B cell (primary cell): ENCODE measurements at regions of chr7 and their contacts with region 1.

Region 1: GRCh38 chr7:141533149-141533949 is 17.9 kb upstream of the AGK start:
- DNase-seq: peak; percentile 67
- ATAC-seq: peak; percentile 63
- H3K4me3 ChIP-seq: no peak overlapping the region
- H3K4me3 Mint-ChIP-seq: no peak overlapping the region
- H3K27ac ChIP-seq: no peak overlapping the region
- H3K27ac Mint-ChIP-seq: no peak overlapping the region
- H3K4me1 ChIP-seq: no peaks in the 10 kb centered on the region
- H3K4me1 Mint-ChIP-seq: no peaks in the 10 kb centered on the region
- H3K27me3 ChIP-seq: peaks cover 0 to 16% (median 7%) of the 10 kb centered on the region in 4 experiments
- H3K27me3 Mint-ChIP-seq: peaks cover 37% of the 10 kb centered on the region
- CTCF ChIP-seq: peak; percentile 95

Region 2: GRCh38 chr7:140517546-140518369 is 1015.6 kb before region 1 on chr7:
- CTCF ChIA-PET with region 1: interaction called, 15 read pairs
- POLR2A ChIA-PET with region 1: no interaction called
- intact Hi-C with region 1: no loop called
- DNase-seq: peak; percentile 76
- ATAC-seq: peak; percentile 67
- H3K4me3 ChIP-seq: no peak overlapping the region
- H3K4me3 Mint-ChIP-seq: peak overlapping the region; percentile 62
- H3K27ac ChIP-seq: no peak overlapping the region
- H3K27ac Mint-ChIP-seq: no peak overlapping the region
- H3K4me1 ChIP-seq: peaks cover 0 to 5% of the 10 kb centered on the region in 2 donors
- H3K4me1 Mint-ChIP-seq: peaks cover 4% of the 10 kb centered on the region
- H3K27me3 ChIP-seq: peaks cover 0 to 3% (median 0%) of the 10 kb centered on the region in 4 experiments
- H3K27me3 Mint-ChIP-seq: peaks cover 21% of the 10 kb centered on the region
- CTCF ChIP-seq: peak; percentile 75

Region 3: GRCh38 chr7:140810830-140811556 is 722.4 kb before region 1 on chr7:
- CTCF ChIA-PET with region 1: interaction called, 5 read pairs
- POLR2A ChIA-PET with region 1: no interaction called
- intact Hi-C with region 1: loop called (anchors 1 kb)
- DNase-seq: peak; percentile 82
- ATAC-seq: peak; percentile 73
- H3K4me3 ChIP-seq: no peak overlapping the region
- H3K4me3 Mint-ChIP-seq: no peak overlapping the region
- H3K27ac ChIP-seq: no peak overlapping the region
- H3K27ac Mint-ChIP-seq: peak overlapping the region; percentile 17
- H3K4me1 ChIP-seq: no peaks in the 10 kb centered on the region
- H3K4me1 Mint-ChIP-seq: peaks cover 1% of the 10 kb centered on the region
- H3K27me3 ChIP-seq: no peaks in the 10 kb centered on the region
- H3K27me3 Mint-ChIP-seq: no peaks in the 10 kb centered on the region
- CTCF ChIP-seq: peak; percentile 82

Region 4: GRCh38 chr7:141071260-141071854 is 462.0 kb before region 1 on chr7:
- CTCF ChIA-PET with region 1: interaction called, 3 read pairs
- POLR2A ChIA-PET with region 1: no interaction called
- intact Hi-C with region 1: loop called (anchors 2 kb)
- DNase-seq: peak; percentile 20
- ATAC-seq: no peak
- H3K4me3 ChIP-seq: peak overlapping the region in 4 of 5 experiments; percentile 13 to 50 (median 34)
- H3K4me3 Mint-ChIP-seq: peak overlapping the region; percentile 85
- H3K27ac ChIP-seq: no peak overlapping the region
- H3K27ac Mint-ChIP-seq: no peak overlapping the region
- H3K4me1 ChIP-seq: peaks cover 32 to 35% of the 10 kb centered on the region in 2 donors
- H3K4me1 Mint-ChIP-seq: peaks cover 25% of the 10 kb centered on the region
- H3K27me3 ChIP-seq: peaks cover 0 to 48% (median 32%) of the 10 kb centered on the region in 4 experiments
- H3K27me3 Mint-ChIP-seq: peaks cover 41% of the 10 kb centered on the region
- CTCF ChIP-seq: no peak

Region 5: GRCh38 chr7:141522657-141523342 is 10.5 kb before region 1 on chr7:
- CTCF ChIA-PET with region 1: interaction called, 12 read pairs
- POLR2A ChIA-PET with region 1: no interaction called
- intact Hi-C with region 1: no loop called
- DNase-seq: no peak
- ATAC-seq: no peak
- H3K4me3 ChIP-seq: no peak overlapping the region
- H3K4me3 Mint-ChIP-seq: no peak overlapping the region
- H3K27ac ChIP-seq: no peak overlapping the region
- H3K27ac Mint-ChIP-seq: no peak overlapping the region
- H3K4me1 ChIP-seq: no peaks in the 10 kb centered on the region
- H3K4me1 Mint-ChIP-seq: no peaks in the 10 kb centered on the region
- H3K27me3 ChIP-seq: peaks cover 0 to 4% (median 0%) of the 10 kb centered on the region in 4 experiments
- H3K27me3 Mint-ChIP-seq: peaks cover 25% of the 10 kb centered on the region
- CTCF ChIP-seq: no peak

Region 6: GRCh38 chr7:141544235-141544634 is 10.9 kb after region 1 on chr7:
- CTCF ChIA-PET with region 1: interaction called, 10 read pairs
- POLR2A ChIA-PET with region 1: no interaction called
- intact Hi-C with region 1: no loop called
- DNase-seq: no peak
- ATAC-seq: no peak
- H3K4me3 ChIP-seq: no peak overlapping the region
- H3K4me3 Mint-ChIP-seq: no peak overlapping the region
- H3K27ac ChIP-seq: no peak overlapping the region
- H3K27ac Mint-ChIP-seq: no peak overlapping the region
- H3K4me1 ChIP-seq: no peaks in the 10 kb centered on the region
- H3K4me1 Mint-ChIP-seq: no peaks in the 10 kb centered on the region
- H3K27me3 ChIP-seq: no peaks in the 10 kb centered on the region
- H3K27me3 Mint-ChIP-seq: peaks cover 3% of the 10 kb centered on the region
- CTCF ChIP-seq: no peak

Region 7: GRCh38 chr7:141663081-141663849 is 129.9 kb after region 1 on chr7:
- CTCF ChIA-PET with region 1: no interaction called
- POLR2A ChIA-PET with region 1: no interaction called
- intact Hi-C with region 1: no loop called
- DNase-seq: no peak
- ATAC-seq: no peak
- H3K4me3 ChIP-seq: no peak overlapping the region
- H3K4me3 Mint-ChIP-seq: no peak overlapping the region
- H3K27ac ChIP-seq: peak overlapping the region in 1 of 2 donors; percentile 21
- H3K27ac Mint-ChIP-seq: peak overlapping the region; percentile 53
- H3K4me1 ChIP-seq: no peaks in the 10 kb centered on the region
- H3K4me1 Mint-ChIP-seq: peaks cover 11% of the 10 kb centered on the region
- H3K27me3 ChIP-seq: no peaks in the 10 kb centered on the region
- H3K27me3 Mint-ChIP-seq: no peaks in the 10 kb centered on the region
- CTCF ChIP-seq: no peak